ENCODE measurements at regions of chr3 and their contacts with region 1.

Region 1: DNA sequence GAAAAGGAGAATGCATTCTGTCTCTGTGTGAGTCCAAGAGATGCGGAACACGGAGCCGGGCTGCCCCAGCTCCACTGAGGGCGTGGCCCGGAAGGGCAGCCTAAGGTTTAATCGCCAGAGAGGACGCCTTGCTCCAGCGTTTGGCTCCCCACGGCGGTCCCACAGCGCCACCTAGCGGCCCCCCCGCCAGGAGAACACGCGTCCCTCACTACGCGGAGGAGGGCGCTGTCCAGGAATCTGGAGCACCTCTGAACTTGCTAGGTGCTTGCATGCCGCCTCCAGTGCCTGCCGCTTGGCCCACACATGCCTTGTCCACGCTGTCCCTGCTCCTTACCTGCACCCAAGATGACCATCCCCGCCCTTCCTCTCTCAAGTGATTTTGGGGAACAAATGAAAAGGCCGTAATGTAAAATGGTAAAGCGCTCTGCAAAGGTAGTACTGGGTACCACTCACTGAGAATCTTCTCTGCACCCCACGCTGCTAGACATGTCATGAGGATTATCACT is 14.4 kb upstream of the MRPS22 start:
- DNase-seq: peak; percentile 85 to 92
- ATAC-seq: peak; percentile 93 to 100 (median 96)
- H3K4me3 ChIP-seq: no peak overlapping the region
- H3K27ac ChIP-seq: no peak overlapping the region
- H3K4me1 ChIP-seq: no peaks in the 10 kb centered on the region
- H3K27me3 ChIP-seq: peaks cover 0 to 7% (median 0%) of the 10 kb centered on the region in 3 donors
- CTCF ChIP-seq: peak; percentile 99

Region 2: DNA sequence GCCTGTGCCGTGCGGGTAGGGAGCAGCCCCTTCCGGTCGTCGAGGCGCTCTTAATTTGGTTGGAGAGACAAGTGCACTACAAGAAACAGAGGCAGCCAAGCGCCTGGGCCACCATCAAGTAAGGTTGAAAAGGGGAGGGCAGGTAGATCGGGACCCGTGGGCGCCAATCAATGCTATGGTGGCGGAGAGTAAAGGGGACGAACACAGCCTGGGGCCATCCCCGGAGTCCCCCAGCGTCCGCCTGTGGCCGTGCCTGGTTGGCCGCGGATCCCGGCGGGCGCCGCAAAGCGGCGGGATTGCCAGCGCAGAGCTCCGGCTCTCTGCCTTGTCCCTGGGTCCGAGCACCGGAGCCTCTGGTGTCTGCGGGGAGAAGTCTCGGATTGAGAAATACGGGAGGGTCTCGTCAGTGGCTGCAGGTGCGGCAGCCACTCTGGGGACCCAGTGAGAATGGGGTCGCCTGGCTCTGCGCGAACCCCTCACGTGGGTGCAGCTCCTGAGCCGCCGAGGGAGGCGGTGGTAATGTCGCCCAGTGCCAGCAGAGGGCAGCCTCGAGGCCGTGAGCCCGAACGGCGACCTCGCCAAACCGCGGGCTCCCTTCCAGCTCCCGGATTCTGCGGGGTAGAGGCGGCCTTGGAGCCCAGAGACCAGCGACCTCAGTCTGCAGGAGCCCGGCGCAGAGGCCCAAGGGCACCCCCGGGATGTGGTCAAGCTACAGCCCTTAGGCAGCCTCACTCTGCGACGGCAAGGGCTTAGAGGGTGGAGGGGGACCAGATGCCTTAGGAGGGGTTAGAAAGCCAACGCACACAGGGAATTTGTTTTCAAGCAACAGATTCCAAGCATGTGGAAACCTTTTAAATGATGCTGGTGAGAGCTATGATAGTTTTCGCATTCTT is 393.3 kb before region 1 on chr3:
- intact Hi-C with region 1: loop called (anchors 2 to 5 kb)
- DNase-seq: peak; percentile 81 to 90
- ATAC-seq: peak; percentile 82 to 94 (median 88)
- H3K4me3 ChIP-seq: peak overlapping the region; percentile 66
- H3K27ac ChIP-seq: no peak overlapping the region
- H3K4me1 ChIP-seq: peaks cover 36% of the 10 kb centered on the region
- H3K27me3 ChIP-seq: peaks cover 0 to 55% (median 29%) of the 10 kb centered on the region in 3 donors
- CTCF ChIP-seq: peak; percentile 93

Region 3: DNA sequence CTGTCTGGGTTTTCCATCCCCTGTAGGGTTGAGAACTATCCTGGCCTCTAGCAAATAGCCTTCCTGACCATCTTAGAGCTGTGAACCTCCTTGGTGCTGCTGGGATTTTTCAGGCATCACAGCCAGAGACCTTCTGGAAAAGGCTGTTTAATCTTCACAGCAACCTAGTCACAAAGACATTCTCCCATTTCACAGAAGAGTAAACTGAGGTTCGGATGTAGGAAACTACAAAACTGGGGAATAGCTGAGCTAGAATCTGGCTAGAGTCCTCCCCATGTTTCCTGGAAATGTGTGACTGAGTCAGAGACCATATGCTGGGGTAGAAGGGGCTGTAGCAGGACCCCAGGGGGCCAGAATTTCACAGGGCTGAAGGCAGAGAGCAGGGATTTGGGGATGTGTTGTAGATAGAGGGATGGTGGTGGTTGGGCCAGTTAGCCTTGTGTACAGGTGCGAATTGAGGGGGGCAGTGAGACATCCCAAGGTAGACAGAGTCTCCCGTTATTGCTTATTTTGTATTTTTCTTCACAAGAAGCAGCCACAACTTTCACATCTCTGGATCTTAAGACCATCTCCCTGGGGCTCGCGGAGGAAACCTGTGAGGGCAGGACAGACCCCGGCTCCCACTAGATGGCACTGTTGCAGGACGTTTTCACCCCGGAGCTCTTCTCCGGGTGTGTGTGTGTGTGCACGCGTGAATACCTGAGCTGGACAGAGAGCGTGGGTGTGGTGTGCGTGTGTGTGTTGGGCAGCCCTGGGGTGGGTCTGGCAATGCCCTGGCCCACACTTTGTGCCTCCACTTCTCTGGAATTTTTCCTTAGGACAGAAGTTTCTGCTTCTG is 217.8 kb before region 1 on chr3:
- intact Hi-C with region 1: loop called (anchors 2 kb)
- DNase-seq: peak; percentile 51 to 71
- ATAC-seq: peak; percentile 66 to 86 (median 75)
- H3K4me3 ChIP-seq: no peak overlapping the region
- H3K27ac ChIP-seq: no peak overlapping the region
- H3K4me1 ChIP-seq: no peaks in the 10 kb centered on the region
- H3K27me3 ChIP-seq: no peaks in the 10 kb centered on the region
- CTCF ChIP-seq: peak; percentile 63